Activated CD8-positive, alpha-beta T cell treated with anti-CD3 and anti-CD28 coated beads for 36 hours (primary cell): ENCODE measurements at regions of chr22 and their contacts with region 1.

Region 1: GRCh38 chr22:42614312-42615091 is at the start of gene POLDIP3:
- DNase-seq: peak; percentile 99
- ATAC-seq: peak; percentile 75
- H3K4me3 Mint-ChIP-seq: peak within 1 kb of the TSS; percentile 91
- H3K27ac Mint-ChIP-seq: peak within 1 kb of the TSS; percentile 100
- H3K4me1 Mint-ChIP-seq: peaks cover 49% of the 10 kb centered on the region
- H3K27me3 Mint-ChIP-seq: no peaks in the 10 kb centered on the region
- CTCF ChIP-seq: no peak
- total RNA-seq, gene POLDIP3: 70.2 to 71.1 TPM

Region 2: DNA sequence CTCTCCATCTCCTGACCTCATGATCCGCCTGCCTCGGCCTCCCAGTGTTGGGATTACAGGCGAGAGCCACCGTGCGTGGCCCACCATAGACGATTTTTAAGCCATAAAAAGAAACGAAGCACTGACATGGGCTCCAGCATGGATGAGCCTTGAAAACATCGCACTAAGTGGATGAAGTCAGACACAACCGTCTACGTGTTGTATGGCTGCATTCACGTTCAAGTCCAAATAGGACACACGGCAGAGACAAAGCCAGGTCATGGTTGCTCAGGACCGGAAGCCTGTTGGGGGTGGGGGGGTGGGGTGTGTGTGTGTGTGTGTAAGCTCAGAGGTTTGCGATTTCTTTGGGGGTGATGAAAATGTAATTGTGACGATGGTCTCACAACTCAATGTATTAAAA is 105.0 kb before region 1 on chr22:
- CTCF ChIA-PET with region 1: no interaction called
- POLR2A ChIA-PET with region 1: no interaction called
- intact Hi-C with region 1: no loop called
- DNase-seq: no peak
- ATAC-seq: no peak
- H3K4me3 Mint-ChIP-seq: no peak overlapping the region
- H3K27ac Mint-ChIP-seq: no peak overlapping the region
- H3K4me1 Mint-ChIP-seq: no peaks in the 10 kb centered on the region
- H3K27me3 Mint-ChIP-seq: no peaks in the 10 kb centered on the region
- CTCF ChIP-seq: no peak

Region 3: GRCh38 chr22:42553475-42554361 is 60.8 kb before region 1 on chr22 and contains the start of gene SERHL2:
- CTCF ChIA-PET with region 1: no interaction called
- POLR2A ChIA-PET with region 1: no interaction called
- intact Hi-C with region 1: no loop called
- DNase-seq: peak; percentile 83
- ATAC-seq: peak; percentile 96
- H3K4me3 Mint-ChIP-seq: peak within 1 kb of the TSS; percentile 73
- H3K27ac Mint-ChIP-seq: no peak within 1 kb of the TSS
- H3K4me1 Mint-ChIP-seq: peaks cover 13% of the 10 kb centered on the region
- H3K27me3 Mint-ChIP-seq: no peaks in the 10 kb centered on the region
- CTCF ChIP-seq: no peak
- total RNA-seq, gene SERHL2: 1.1 to 1.4 TPM

Region 4: DNA sequence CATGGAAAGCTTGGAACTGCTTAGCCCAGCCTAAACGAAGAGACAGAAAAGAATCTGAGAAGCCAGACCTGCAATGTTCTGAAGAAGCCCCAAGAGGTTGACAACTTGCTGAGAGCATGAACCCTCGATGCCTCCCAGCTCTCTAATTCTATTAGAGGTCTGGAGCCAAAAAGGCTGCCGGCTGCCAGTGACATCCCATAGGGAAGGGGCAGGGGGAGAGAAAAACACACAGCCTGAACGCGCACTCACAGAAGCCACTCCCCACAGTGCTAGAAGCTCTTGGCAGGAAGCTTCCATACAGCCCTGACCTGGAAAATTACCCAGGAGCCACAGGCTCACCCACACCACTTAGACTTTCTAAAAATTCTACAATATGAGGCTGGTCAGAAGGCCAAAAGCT is 18.2 kb before region 1 on chr22:
- CTCF ChIA-PET with region 1: interaction called, 4 read pairs
- POLR2A ChIA-PET with region 1: interaction called, 69 read pairs
- intact Hi-C with region 1: no loop called
- DNase-seq: no peak
- ATAC-seq: no peak
- H3K4me3 Mint-ChIP-seq: no peak overlapping the region
- H3K27ac Mint-ChIP-seq: no peak overlapping the region
- H3K4me1 Mint-ChIP-seq: no peaks in the 10 kb centered on the region
- H3K27me3 Mint-ChIP-seq: no peaks in the 10 kb centered on the region
- CTCF ChIP-seq: no peak

Region 5: GRCh38 chr22:42635531-42635930 is 21.0 kb after region 1 on chr22:
- CTCF ChIA-PET with region 1: no interaction called
- POLR2A ChIA-PET with region 1: interaction called, 18 read pairs
- intact Hi-C with region 1: no loop called
- DNase-seq: no peak
- ATAC-seq: no peak
- H3K4me3 Mint-ChIP-seq: no peak overlapping the region
- H3K27ac Mint-ChIP-seq: no peak overlapping the region
- H3K4me1 Mint-ChIP-seq: peaks cover 8% of the 10 kb centered on the region
- H3K27me3 Mint-ChIP-seq: no peaks in the 10 kb centered on the region
- CTCF ChIP-seq: no peak

Region 6: GRCh38 chr22:42655693-42656092 is 41.2 kb after region 1 on chr22:
- CTCF ChIA-PET with region 1: no interaction called
- POLR2A ChIA-PET with region 1: interaction called, 19 read pairs
- intact Hi-C with region 1: no loop called
- DNase-seq: no peak
- ATAC-seq: no peak
- H3K4me3 Mint-ChIP-seq: no peak overlapping the region
- H3K27ac Mint-ChIP-seq: no peak overlapping the region
- H3K4me1 Mint-ChIP-seq: no peaks in the 10 kb centered on the region
- H3K27me3 Mint-ChIP-seq: no peaks in the 10 kb centered on the region
- CTCF ChIP-seq: no peak

Region 7: DNA sequence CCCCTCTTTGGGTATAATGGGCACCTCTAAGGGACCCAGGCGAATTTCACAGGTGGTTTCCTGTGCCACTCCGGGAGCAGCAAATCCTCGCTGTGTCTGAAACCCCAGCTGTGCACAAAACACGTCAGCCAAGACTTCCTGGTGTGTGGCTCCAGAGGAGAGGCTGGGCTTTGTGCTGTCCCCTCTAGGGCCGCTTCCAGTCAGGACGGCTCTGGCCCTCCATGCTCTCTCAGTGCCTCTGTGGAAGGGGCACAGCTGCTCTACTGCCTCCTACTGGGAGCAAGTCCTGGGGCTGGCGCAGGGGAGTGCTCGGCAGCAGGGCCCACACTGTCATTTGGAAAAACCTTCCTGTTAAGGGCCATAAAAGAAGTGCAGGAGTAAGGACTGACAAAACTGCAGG is 266.3 kb after region 1 on chr22:
- CTCF ChIA-PET with region 1: no interaction called
- POLR2A ChIA-PET with region 1: no interaction called
- intact Hi-C with region 1: no loop called
- DNase-seq: no peak
- ATAC-seq: no peak
- H3K4me3 Mint-ChIP-seq: no peak overlapping the region
- H3K27ac Mint-ChIP-seq: no peak overlapping the region
- H3K4me1 Mint-ChIP-seq: no peaks in the 10 kb centered on the region
- H3K27me3 Mint-ChIP-seq: no peaks in the 10 kb centered on the region
- CTCF ChIP-seq: no peak